Right ventricle myocardium inferior (tissue), 1 donor: ENCODE measurements at regions of chr1 and their contacts with region 1.

Region 1: DNA sequence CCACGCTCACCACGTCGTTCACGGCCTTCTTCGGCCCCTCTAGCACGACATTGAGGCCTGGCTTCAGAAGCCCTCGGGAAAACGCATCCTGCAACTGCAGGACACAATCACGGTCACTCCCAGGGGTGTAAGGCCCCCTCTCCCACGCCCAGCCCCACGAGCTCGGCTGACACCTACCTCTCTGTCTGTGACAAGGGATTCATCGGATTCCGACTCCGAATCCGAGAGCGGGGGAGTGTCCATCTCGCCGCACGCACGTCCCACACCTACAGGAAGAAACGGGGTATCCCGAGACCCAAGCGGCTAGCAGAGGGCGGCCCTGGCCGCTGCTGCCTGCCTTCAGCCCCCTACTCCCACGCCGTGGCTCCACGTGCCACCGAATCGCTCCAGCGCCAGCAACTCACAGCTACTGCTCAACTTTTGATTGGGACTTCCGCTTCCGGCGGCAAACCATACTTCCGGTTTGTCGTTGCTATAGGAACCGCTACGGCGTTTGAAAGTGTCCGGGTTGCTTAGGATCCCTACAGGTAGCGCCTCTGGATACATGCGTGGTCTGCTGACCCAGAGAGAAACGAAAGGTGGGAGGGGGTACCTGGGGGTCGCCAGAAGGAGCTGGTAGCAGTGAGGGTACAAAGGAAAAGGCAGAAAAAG is at the starts of genes CFAP57 and EBNA1BP2:
- DNase-seq: peak; percentile 92
- ATAC-seq: peak; percentile 90
- total RNA-seq, gene CFAP57: not detected
- total RNA-seq, gene EBNA1BP2: 26.8 TPM

Region 2: GRCh38 chr1:43073490-43074230 is 98.3 kb before region 1 on chr1:
- intact Hi-C with region 1: no loop called
- DNase-seq: peak; percentile 87
- ATAC-seq: peak; percentile 90

Region 3: GRCh38 chr1:43206600-43207228 is 34.7 kb after region 1 on chr1:
- intact Hi-C with region 1: loop called (anchors 5 kb)
- DNase-seq: no peak
- ATAC-seq: peak; percentile 48

Region 4: GRCh38 chr1:43220905-43221778 is 49.1 kb after region 1 on chr1:
- intact Hi-C with region 1: no loop called
- DNase-seq: no peak
- ATAC-seq: peak; percentile 18